HEK293T (cell line): ENCODE measurements at regions of chr17 and their contacts with region 1.

Region 1: GRCh38 chr17:59106463-59107305 is at the start of gene TRIM37:
- DNase-seq: peak; percentile 99

Region 2: GRCh38 chr17:58786613-58787295 is 319.9 kb before region 1 on chr17:
- CTCF ChIA-PET with region 1: no interaction called
- POLR2A ChIA-PET with region 1: no interaction called
- DNase-seq: no peak

Region 3: DNA sequence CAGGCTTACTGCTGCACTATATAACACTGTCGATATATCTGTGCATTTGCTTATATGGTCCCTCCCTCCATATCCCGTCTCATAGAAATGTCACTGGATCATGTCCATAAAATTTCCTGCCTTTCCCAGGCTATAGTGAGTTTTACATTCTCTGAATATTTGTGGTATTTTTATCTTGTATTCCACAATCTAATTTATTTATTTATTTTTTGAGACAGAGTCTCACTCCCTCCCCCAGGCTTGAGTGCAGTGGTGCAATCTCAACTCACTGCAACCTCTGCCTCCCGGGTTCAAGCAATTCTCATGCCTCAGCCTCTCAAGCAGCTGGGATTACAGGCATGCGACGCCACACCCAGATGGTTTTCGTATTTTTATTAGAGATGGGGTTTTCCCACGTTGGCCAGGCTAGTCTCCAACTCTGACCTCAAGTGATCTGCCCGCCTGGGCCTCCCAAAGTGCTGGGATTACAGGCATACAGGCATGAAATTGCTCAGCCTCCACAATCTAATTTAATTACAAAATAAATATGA is 12.9 kb before region 1 on chr17:
- CTCF ChIA-PET with region 1: interaction called, 4 read pairs
- POLR2A ChIA-PET with region 1: interaction called, 28 read pairs
- DNase-seq: peak; percentile 33

Region 4: GRCh38 chr17:59155439-59156182 is 48.9 kb after region 1 on chr17 and contains the start of gene PRR11:
- CTCF ChIA-PET with region 1: no interaction called
- POLR2A ChIA-PET with region 1: interaction called, 25 read pairs
- DNase-seq: no peak